ENCODE measurements at regions of chr12 and their contacts with region 1.

Region 1: DNA sequence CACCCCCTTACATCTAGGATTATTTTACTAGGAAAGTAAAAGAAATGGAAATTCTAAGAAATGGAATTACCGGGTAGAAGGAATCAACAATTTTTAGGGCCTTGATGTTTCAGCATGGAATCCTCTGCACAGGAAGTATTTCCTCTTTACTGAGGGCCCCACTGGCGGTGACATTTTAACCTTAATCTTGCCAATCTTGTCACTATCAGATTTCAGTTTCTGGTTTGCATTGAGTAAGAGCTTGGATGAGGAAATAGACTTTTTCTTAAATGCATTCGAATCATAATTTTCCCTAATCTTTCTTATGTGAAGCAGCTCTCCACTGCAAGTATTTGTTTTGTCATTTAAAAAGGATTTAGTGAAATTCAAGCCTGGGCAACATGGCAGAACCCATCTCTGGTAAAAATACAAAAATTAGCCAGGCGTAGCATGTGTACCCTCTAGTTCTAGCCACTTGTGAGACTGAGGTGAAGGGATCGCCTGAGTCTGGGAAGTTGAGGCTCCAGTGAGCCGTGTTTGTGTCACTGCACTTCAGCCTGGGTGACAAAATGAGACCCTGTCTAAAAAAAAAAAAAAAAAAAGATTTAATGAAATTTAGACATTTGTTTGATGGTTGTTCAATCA is 40.7 kb downstream of the TPCN1 start:
- DNase-seq: peak; percentile 33
- H3K4me3 Mint-ChIP-seq: peak overlapping the region; percentile 34
- H3K27ac Mint-ChIP-seq: peak overlapping the region; percentile 59
- H3K4me1 Mint-ChIP-seq: peaks cover 42% of the 10 kb centered on the region
- H3K27me3 Mint-ChIP-seq: no peaks in the 10 kb centered on the region

Region 2: GRCh38 chr12:113208041-113208934 is 53.7 kb before region 1 on chr12:
- intact Hi-C with region 1: loop called (anchors 2 kb)
- DNase-seq: peak; percentile 72
- H3K4me3 Mint-ChIP-seq: peak overlapping the region; percentile 75
- H3K27ac Mint-ChIP-seq: peak overlapping the region; percentile 96
- H3K4me1 Mint-ChIP-seq: peaks cover 65% of the 10 kb centered on the region
- H3K27me3 Mint-ChIP-seq: no peaks in the 10 kb centered on the region

Region 3: GRCh38 chr12:113271853-113272561 is 10.0 kb after region 1 on chr12:
- intact Hi-C with region 1: loop called (anchors 1 kb)
- DNase-seq: no peak
- H3K4me3 Mint-ChIP-seq: no peak overlapping the region
- H3K27ac Mint-ChIP-seq: no peak overlapping the region
- H3K4me1 Mint-ChIP-seq: peaks cover 15% of the 10 kb centered on the region
- H3K27me3 Mint-ChIP-seq: no peaks in the 10 kb centered on the region